Activated CD4-positive, alpha-beta T cell treated with anti-CD3 and anti-CD28 coated beads, Interleukin-2, amount 10 ng/mL, durations not matched to agents 24 days and 14 days (primary cell): ENCODE measurements at regions of chr3 and their contacts with region 1.

Region 1: GRCh38 chr3:142279965-142280590 is 54.7 kb upstream of the GK5 start:
- DNase-seq: peak; percentile 86
- H3K4me3 Mint-ChIP-seq: no peak overlapping the region
- H3K27ac Mint-ChIP-seq: peak overlapping the region; percentile 31
- H3K4me1 Mint-ChIP-seq: peaks cover 11% of the 10 kb centered on the region
- H3K27me3 Mint-ChIP-seq: no peaks in the 10 kb centered on the region

Region 2: DNA sequence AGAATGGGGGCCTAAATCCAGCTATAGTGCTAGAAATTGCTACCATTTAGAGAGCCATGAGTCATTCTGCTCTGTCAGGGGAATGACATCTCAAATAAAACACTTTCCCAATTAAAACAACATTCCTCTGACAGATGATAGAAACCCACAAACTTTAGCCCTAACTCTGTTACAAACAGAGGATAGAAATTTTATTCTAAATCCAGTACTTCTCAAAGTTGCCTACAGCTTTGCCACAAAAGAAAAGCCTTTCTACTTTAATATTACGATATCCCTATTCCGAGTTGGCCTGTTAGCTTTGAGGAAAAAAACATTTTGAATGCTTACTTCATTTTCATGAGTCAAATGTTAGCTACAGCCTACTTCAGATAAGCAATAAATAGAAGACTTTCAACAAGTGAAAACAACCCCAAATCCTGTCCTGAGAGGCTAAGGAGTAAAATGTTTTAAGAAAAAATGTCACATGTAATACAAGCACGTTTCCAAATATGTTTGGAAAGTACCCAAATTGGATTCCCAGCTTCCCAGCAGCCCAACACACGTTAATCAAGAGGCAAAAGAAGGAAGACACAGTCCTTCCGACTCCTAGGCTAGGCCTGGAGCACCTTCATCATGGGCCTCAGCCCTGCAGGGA is 320.0 kb before region 1 on chr3:
- intact Hi-C with region 1: loop called (anchors 1 kb)
- DNase-seq: no peak
- H3K4me3 Mint-ChIP-seq: no peak overlapping the region
- H3K27ac Mint-ChIP-seq: no peak overlapping the region
- H3K4me1 Mint-ChIP-seq: peaks cover 3% of the 10 kb centered on the region
- H3K27me3 Mint-ChIP-seq: no peaks in the 10 kb centered on the region

Region 3: DNA sequence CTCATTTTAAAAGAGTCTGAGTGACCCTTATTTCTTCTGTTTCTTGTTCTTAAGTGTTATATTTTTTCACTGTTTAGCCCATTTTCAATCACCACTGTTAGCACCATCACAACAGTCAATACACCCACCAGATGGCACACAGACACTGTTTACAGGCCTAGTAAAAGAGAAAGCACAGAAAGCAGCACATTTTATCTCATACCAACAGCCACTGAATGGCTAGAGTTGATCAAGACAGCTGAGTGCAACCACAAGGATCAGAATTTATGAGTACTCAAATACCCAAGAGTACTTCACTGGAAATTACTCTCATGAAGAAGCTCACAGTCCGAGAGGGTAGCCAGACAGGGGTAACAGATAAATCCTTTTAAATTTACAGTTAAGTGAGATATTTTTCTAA is 257.7 kb before region 1 on chr3:
- intact Hi-C with region 1: loop called (anchors 5 kb)
- DNase-seq: peak; percentile 69
- H3K4me3 Mint-ChIP-seq: no peak overlapping the region
- H3K27ac Mint-ChIP-seq: no peak overlapping the region
- H3K4me1 Mint-ChIP-seq: peaks cover 23% of the 10 kb centered on the region
- H3K27me3 Mint-ChIP-seq: no peaks in the 10 kb centered on the region

Region 4: GRCh38 chr3:142129516-142130171 is 150.4 kb before region 1 on chr3:
- intact Hi-C with region 1: loop called (anchors 1 kb)
- DNase-seq: no peak
- H3K4me3 Mint-ChIP-seq: no peak overlapping the region
- H3K27ac Mint-ChIP-seq: no peak overlapping the region
- H3K4me1 Mint-ChIP-seq: peaks cover 2% of the 10 kb centered on the region
- H3K27me3 Mint-ChIP-seq: no peaks in the 10 kb centered on the region

Region 5: DNA sequence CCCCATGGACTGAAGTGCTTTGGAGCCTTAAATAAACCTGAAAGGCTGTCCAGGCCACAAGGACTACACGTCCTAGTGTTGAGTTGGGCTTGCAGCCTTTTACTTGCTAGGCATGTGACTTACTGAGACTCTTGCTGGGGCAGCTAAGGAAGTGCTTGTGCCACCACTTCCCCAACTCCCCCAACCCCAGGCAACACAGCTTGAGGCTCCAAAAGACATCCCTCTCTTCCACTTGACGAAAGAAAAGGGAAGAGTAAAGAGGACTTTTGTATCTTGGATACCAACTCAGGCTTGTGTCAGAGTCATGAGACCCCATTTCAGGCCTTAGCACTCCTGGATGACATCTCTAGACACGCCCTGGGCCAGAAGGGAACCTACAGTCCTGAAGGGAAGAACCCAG is 57.9 kb after region 1 on chr3:
- intact Hi-C with region 1: no loop called
- DNase-seq: no peak
- H3K4me3 Mint-ChIP-seq: no peak overlapping the region
- H3K27ac Mint-ChIP-seq: no peak overlapping the region
- H3K4me1 Mint-ChIP-seq: peaks cover 3% of the 10 kb centered on the region
- H3K27me3 Mint-ChIP-seq: no peaks in the 10 kb centered on the region

Region 6: DNA sequence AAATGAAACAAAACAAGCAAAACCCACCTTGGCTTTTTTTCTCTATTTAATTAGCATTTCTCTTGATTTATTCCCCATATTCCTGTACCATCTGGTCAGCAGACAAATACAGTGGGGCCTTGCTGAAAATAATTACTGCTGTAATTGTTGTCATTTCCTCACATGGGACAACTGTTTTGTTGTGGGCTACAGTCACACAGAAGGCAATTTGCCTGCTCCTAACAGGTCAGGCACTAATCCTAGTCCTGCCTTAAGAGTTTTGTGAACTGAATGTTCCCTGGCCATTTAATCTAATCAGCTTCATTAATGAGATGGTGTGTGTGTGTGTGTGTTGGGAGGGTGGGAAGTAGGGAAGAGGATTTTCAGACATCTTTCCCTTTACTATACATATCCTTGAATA is 455.4 kb after region 1 on chr3:
- intact Hi-C with region 1: no loop called
- DNase-seq: no peak
- H3K4me3 Mint-ChIP-seq: no peak overlapping the region
- H3K27ac Mint-ChIP-seq: no peak overlapping the region
- H3K4me1 Mint-ChIP-seq: no peaks in the 10 kb centered on the region
- H3K27me3 Mint-ChIP-seq: peaks cover 2% of the 10 kb centered on the region